Activated B cell treated with CpG ODN at 0.5 μM for 24 hours (primary cell): ENCODE measurements at regions of chr3 and their contacts with region 1.

Region 1: GRCh38 chr3:122415720-122416654 is at the start of gene WDR5B:
- DNase-seq: peak; percentile 95
- ATAC-seq: peak; percentile 89
- H3K4me3 Mint-ChIP-seq: peak within 1 kb of the TSS; percentile 98
- H3K27ac Mint-ChIP-seq: peak within 1 kb of the TSS; percentile 100
- H3K4me1 Mint-ChIP-seq: peaks cover 46% of the 10 kb centered on the region
- H3K27me3 Mint-ChIP-seq: no peaks in the 10 kb centered on the region
- CTCF ChIP-seq: no peak
- total RNA-seq, gene WDR5B: 8.0 and 8.1 TPM in 2 replicates

Region 2: GRCh38 chr3:120742198-120742849 is 1673.7 kb before region 1 on chr3 and contains the starts of genes GTF2E1 and RABL3:
- CTCF ChIA-PET with region 1: no interaction called
- POLR2A ChIA-PET with region 1: no interaction called
- intact Hi-C with region 1: loop called (anchors 2 kb)
- DNase-seq: peak; percentile 88
- ATAC-seq: peak; percentile 96
- H3K4me3 Mint-ChIP-seq: peak within 1 kb of the TSS; percentile 96
- H3K27ac Mint-ChIP-seq: peak within 1 kb of the TSS; percentile 97
- H3K4me1 Mint-ChIP-seq: peaks cover 36% of the 10 kb centered on the region
- H3K27me3 Mint-ChIP-seq: no peaks in the 10 kb centered on the region
- CTCF ChIP-seq: no peak
- total RNA-seq, gene GTF2E1: 22.1 and 22.9 TPM in 2 replicates
- total RNA-seq, gene RABL3: 29.7 and 29.9 TPM in 2 replicates

Region 3: DNA sequence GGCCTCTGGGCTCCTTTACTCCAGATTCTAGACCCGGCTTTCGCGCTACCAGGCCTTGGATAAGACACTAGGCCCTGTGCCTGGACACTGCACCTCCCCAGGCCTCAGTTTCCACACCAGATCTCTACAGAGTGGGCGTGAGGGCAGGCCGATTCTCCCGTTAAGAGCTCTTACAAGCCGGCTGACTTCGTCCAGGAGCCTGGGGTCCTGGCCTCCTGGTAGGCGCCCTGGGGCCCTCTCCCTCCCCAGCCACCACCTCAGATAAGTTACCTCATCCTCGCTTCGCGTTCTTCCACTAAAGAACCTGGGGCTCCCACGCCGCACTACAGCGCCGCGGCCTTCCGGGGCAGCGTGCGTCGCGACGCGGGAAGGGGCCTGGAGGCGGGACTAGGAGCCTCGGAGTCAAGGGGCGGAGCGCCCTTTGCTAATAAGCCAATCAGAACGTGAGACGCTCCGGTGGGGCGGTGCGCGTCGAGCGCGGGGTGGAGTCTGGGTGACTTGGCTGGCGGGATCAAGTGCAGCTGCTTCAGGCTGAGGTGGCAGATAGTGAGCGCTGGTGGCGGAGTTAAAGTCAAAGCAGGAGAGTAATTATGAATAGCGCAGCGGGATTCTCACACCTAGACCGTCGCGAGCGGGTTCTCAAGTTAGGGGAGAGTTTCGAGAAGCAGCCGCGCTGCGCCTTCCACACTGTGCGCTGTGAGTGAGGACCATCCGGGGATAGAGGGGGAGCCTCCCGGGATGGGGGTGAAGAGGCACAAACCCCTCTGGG is 581.1 kb before region 1 on chr3 and contains the starts of genes EAF2 and IQCB1:
- CTCF ChIA-PET with region 1: no interaction called
- POLR2A ChIA-PET with region 1: interaction called, 4 read pairs
- intact Hi-C with region 1: loop called (anchors 1 kb)
- DNase-seq: peak; percentile 93
- ATAC-seq: peak; percentile 98
- H3K4me3 Mint-ChIP-seq: peak within 1 kb of the TSS; percentile 99
- H3K27ac Mint-ChIP-seq: peak within 1 kb of the TSS; percentile 95
- H3K4me1 Mint-ChIP-seq: peaks cover 67% of the 10 kb centered on the region
- H3K27me3 Mint-ChIP-seq: no peaks in the 10 kb centered on the region
- CTCF ChIP-seq: no peak
- total RNA-seq, gene EAF2: 43.3 and 47.7 TPM in 2 replicates
- total RNA-seq, gene IQCB1: 40.1 and 52.4 TPM in 2 replicates

Region 4: GRCh38 chr3:122343654-122344053 is 72.3 kb before region 1 on chr3:
- CTCF ChIA-PET with region 1: no interaction called
- POLR2A ChIA-PET with region 1: no interaction called
- intact Hi-C with region 1: no loop called
- DNase-seq: no peak
- ATAC-seq: no peak
- H3K4me3 Mint-ChIP-seq: no peak overlapping the region
- H3K27ac Mint-ChIP-seq: no peak overlapping the region
- H3K4me1 Mint-ChIP-seq: no peaks in the 10 kb centered on the region
- H3K27me3 Mint-ChIP-seq: peaks cover 2% of the 10 kb centered on the region
- CTCF ChIP-seq: no peak

Region 5: GRCh38 chr3:122427857-122428471 is 12.0 kb after region 1 on chr3:
- CTCF ChIA-PET with region 1: no interaction called
- POLR2A ChIA-PET with region 1: no interaction called
- intact Hi-C with region 1: no loop called
- DNase-seq: no peak
- ATAC-seq: no peak
- H3K4me3 Mint-ChIP-seq: no peak overlapping the region
- H3K27ac Mint-ChIP-seq: no peak overlapping the region
- H3K4me1 Mint-ChIP-seq: no peaks in the 10 kb centered on the region
- H3K27me3 Mint-ChIP-seq: no peaks in the 10 kb centered on the region
- CTCF ChIP-seq: no peak

Region 6: GRCh38 chr3:122514123-122515019 is 98.4 kb after region 1 on chr3 and contains the start of gene KPNA1:
- CTCF ChIA-PET with region 1: no interaction called
- POLR2A ChIA-PET with region 1: interaction called, 16 read pairs
- intact Hi-C with region 1: loop called (anchors 1 kb)
- DNase-seq: peak; percentile 92
- ATAC-seq: peak; percentile 83
- H3K4me3 Mint-ChIP-seq: peak within 1 kb of the TSS; percentile 85
- H3K27ac Mint-ChIP-seq: peak within 1 kb of the TSS; percentile 82
- H3K4me1 Mint-ChIP-seq: peaks cover 42% of the 10 kb centered on the region
- H3K27me3 Mint-ChIP-seq: no peaks in the 10 kb centered on the region
- CTCF ChIP-seq: no peak
- total RNA-seq, gene KPNA1: 72.9 and 76.4 TPM in 2 replicates

Region 7: GRCh38 chr3:122679085-122679881 is 263.3 kb after region 1 on chr3:
- CTCF ChIA-PET with region 1: interaction called, 5 read pairs
- POLR2A ChIA-PET with region 1: interaction called, 4 read pairs
- intact Hi-C with region 1: loop called (anchors 5 kb)
- DNase-seq: peak; percentile 52
- ATAC-seq: peak; percentile 45
- H3K4me3 Mint-ChIP-seq: peak overlapping the region; percentile 90
- H3K27ac Mint-ChIP-seq: peak overlapping the region; percentile 87
- H3K4me1 Mint-ChIP-seq: peaks cover 63% of the 10 kb centered on the region
- H3K27me3 Mint-ChIP-seq: no peaks in the 10 kb centered on the region
- CTCF ChIP-seq: no peak

Region 8: DNA sequence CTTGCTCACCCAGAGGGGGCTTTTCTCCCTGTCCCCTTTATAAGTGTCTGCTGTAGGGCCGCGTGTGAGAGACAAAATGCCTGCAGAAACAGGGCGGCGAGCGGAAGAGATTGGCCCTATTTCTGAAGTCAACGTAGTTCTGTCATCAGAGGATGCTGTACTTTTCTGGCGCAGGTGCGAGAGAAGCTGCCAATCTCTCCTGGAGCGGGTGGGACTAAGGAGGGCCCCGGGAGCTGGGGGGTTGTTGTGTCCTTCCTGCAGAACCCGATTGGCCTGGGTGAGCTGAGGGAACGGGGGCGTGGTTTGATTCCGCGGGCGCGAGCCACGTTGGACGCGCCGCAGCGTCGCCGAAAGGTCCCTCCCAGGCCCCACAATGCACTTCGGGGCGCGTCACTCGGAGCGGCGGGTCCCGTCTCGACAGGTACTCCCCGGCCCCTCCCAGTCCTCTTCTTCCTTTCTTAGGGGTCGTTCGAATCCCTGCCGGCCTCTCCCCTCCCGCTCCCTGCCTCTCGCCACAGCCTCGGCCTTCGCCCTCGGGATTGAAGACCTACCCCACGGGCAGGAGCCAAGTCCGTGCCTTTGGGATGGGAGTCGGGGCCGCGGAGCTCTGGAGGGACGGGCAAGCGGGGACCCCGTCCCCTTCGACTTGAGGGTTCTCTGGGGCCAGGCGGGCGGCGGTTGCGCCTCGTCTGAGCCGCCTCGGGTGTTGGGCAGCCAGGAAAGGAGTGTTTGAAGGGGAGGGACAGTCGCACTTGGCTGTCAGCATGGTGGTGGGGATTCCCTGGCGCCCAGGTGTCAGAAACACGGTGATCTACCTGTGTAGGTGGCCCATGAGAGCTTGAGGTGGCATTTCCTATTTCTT is 785.8 kb after region 1 on chr3 and contains the start of gene SEC22A:
- CTCF ChIA-PET with region 1: no interaction called
- POLR2A ChIA-PET with region 1: interaction called, 5 read pairs
- intact Hi-C with region 1: loop called (anchors 5 kb)
- DNase-seq: peak; percentile 88
- ATAC-seq: peak; percentile 96
- H3K4me3 Mint-ChIP-seq: peak within 1 kb of the TSS; percentile 96
- H3K27ac Mint-ChIP-seq: peak within 1 kb of the TSS; percentile 97
- H3K4me1 Mint-ChIP-seq: peaks cover 16% of the 10 kb centered on the region
- H3K27me3 Mint-ChIP-seq: peaks cover under 1% of the 10 kb centered on the region
- CTCF ChIP-seq: no peak
- total RNA-seq, gene SEC22A: 13.5 and 15.9 TPM in 2 replicates